ENCODE measurements at regions of chrX and their contacts with region 1.

Region 1: DNA sequence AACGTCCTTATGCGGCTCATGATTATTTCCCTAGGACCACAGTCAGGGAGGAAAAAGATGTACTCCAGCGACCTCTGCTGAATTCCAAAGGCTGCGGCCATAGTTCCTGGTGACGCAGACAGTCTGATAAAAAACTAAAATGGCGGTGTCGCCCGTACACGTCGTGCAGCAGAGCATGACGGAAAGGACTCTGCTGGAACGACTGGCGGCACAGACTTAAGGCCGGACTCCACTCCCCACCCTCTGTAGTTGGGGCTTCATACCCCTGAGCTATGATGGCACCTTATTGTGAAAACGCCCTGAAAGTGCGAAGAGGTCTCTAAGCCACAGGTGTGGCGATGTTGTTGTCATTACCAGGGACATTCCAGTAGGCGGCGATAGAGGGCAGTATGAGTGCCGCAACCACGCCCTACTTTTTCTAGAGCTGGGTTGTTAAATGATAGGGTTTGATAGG is 90.0 kb upstream of the EDA2R start:
- H3K4me3 ChIP-seq: peak overlapping the region; percentile 40
- H3K27ac ChIP-seq: no peak overlapping the region
- H3K4me1 ChIP-seq: no peaks in the 10 kb centered on the region
- CTCF ChIP-seq: peak; percentile 52

Region 2: DNA sequence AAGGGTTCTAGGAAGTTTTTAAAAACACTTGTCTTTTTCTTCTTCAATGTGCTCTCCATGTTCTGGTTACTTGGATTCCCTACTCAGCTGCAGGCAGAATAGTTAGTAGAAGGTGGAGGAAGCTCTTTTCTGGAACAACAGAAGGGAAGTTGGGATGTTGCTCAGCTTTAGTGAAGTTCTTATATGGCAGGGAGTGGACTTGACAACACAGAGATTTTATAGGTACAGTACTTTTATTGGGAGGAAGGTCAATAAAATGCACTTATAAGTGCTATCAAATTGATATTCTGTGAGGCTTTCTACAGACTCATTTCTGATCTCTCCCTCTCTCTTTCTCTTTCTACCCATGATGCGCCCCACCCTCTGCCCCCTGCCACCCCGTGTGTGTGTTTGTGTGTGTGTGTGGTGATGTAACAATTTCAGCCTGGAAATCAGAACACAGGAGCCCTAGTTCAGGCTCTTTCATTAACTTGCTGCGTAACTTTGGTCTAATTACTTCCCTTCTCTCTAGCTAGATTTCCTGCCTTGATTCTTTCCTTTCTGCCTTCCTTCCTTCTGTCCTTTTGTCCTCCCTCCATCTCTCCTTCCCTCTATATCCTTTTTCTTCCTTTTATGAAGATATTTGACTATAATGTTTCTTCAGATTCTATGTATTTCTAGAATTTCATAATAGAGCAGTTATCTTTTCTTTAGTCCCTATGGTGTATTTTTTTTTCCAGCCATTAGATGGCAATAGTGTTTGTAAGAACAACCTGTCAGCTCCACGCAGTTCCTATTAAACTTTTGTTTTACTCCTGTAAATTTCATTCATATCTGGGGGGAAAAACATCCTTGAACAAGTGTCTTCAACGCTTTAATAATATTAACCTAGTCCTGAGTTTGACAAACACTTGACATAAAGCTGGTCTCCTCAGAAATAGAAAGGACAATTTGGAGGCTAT is 527.7 kb before region 1 on chrX:
- CTCF ChIA-PET with region 1: interaction called, 14 read pairs
- POLR2A ChIA-PET with region 1: no interaction called
- H3K4me3 ChIP-seq: no peak overlapping the region
- H3K27ac ChIP-seq: no peak overlapping the region
- H3K4me1 ChIP-seq: no peaks in the 10 kb centered on the region
- CTCF ChIP-seq: peak; percentile 49

Region 3: GRCh38 chrX:66633541-66633940 is 95.3 kb before region 1 on chrX:
- CTCF ChIA-PET with region 1: no interaction called
- POLR2A ChIA-PET with region 1: no interaction called
- H3K4me3 ChIP-seq: no peak overlapping the region
- H3K27ac ChIP-seq: no peak overlapping the region
- H3K4me1 ChIP-seq: no peaks in the 10 kb centered on the region
- CTCF ChIP-seq: no peak

Region 4: GRCh38 chrX:66684196-66684595 is 44.6 kb before region 1 on chrX:
- CTCF ChIA-PET with region 1: no interaction called
- POLR2A ChIA-PET with region 1: no interaction called
- H3K4me3 ChIP-seq: no peak overlapping the region
- H3K27ac ChIP-seq: no peak overlapping the region
- H3K4me1 ChIP-seq: no peaks in the 10 kb centered on the region
- CTCF ChIP-seq: no peak

Region 5: DNA sequence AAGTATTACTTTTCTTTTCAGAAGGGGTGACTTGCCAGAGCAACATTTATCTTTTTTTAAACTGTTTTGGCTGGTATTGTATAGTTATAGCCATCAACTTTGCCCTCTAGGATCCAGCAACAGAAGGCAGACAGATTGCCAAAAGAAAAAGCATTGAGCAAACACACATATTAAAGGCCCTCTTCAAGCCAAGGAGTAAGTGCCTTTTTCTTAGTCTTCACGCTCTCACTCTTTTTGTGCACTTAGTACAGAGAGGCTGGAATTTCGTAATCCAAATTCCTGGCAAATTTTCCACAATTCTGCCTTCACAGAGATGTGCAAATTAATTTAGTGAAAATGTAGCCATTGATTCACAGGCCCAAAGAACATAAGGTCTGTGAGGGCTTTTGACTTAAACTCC is 163.2 kb after region 1 on chrX:
- CTCF ChIA-PET with region 1: no interaction called
- POLR2A ChIA-PET with region 1: no interaction called
- H3K4me3 ChIP-seq: no peak overlapping the region
- H3K27ac ChIP-seq: no peak overlapping the region
- H3K4me1 ChIP-seq: no peaks in the 10 kb centered on the region
- CTCF ChIP-seq: no peak